ENCODE measurements at regions of chr14 and their contacts with region 1.

Region 1: DNA sequence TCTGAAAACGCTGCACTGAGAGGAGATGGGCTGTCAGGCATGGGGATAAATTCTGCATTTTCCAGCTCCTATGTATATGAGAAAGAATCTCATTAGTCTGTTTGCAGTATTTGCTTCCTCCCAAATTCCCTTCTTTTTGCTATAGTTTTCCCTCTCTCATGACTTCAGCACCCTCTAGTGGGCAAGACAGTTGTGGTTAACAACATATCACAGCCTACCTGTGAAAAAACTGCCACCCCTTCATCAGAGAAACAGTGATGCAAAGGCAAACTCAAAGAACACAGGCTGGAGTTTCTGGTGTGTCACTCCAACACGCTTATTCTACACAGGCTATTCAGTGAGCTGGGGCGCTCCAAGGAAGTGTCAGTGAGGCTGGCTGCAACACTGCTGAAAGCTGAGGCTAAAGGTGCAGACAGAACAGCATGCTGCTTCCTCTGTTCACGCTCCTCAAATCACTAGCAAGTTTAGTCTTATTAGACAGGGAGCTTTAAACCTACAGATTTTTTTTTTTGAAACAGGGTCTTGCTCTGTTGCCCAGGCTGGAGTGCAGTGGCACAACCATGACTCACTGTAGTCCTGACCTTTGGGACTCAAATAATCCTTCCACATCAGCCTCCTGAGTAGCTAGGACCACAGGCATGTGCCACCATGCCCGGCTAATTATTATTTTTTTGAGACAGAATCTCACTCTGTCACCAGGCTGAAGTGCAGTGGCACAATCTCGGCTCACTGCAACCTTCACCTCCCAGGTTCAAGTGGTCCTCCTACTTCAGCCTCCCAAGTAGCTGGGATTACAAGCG is 19.3 kb downstream of the ZC2HC1C start:
- DNase-seq: peak; percentile 35
- H3K4me3 ChIP-seq: no peak overlapping the region
- H3K27ac ChIP-seq: no peak overlapping the region
- H3K4me1 ChIP-seq: no peaks in the 10 kb centered on the region
- H3K27me3 ChIP-seq: no peaks in the 10 kb centered on the region
- CTCF ChIP-seq: peak; percentile 73 to 77 (median 74)
- EP300 ChIP-seq: no peak
- POLR2A ChIP-seq: no peak

Region 2: DNA sequence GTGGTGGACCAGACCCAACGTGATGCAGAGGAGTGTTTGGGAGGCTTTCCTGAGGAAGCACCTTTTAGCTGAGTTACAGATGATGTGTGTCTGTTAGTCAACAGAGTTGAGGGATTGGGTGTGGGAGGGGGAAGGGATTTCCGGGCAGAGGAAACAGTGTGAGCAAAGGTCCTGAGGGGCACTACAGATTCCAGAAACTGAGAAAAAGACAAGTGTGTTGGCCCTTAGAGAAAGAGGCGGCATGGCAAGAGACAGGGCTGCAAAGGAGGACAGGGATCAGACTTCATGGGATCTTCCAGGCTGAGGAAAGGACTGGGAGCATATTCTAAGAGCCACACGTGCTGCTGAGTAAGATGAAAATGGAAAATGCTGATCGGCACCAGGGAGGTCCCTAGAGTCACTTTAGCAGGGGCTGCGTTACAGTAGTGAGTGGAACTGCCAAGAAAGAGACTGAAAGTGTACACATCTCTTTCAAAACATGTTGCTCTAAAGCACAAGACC is 156.3 kb before region 1 on chr14:
- in situ Hi-C with region 1: loop called in 2 of 4 experiments (anchors 10 to 25 kb)
- intact Hi-C with region 1: no loop called
- DNase-seq: no peak
- H3K4me3 ChIP-seq: no peak overlapping the region
- H3K27ac ChIP-seq: no peak overlapping the region
- H3K4me1 ChIP-seq: peaks cover 0 to 10% (median 0%) of the 10 kb centered on the region in 4 donors
- H3K27me3 ChIP-seq: peaks cover 3% of the 10 kb centered on the region
- CTCF ChIP-seq: no peak
- EP300 ChIP-seq: no peak
- POLR2A ChIP-seq: no peak

Region 3: GRCh38 chr14:74945823-74946682 is 142.7 kb before region 1 on chr14:
- in situ Hi-C with region 1: loop called in 3 of 4 experiments (anchors 10 to 25 kb)
- intact Hi-C with region 1: loop called (anchors 5 kb)
- DNase-seq: peak; percentile 82
- H3K4me3 ChIP-seq: no peak overlapping the region
- H3K27ac ChIP-seq: peak overlapping the region in 2 of 4 donors; percentile 3 to 24
- H3K4me1 ChIP-seq: peaks cover 6 to 30% (median 22%) of the 10 kb centered on the region in 4 donors
- H3K27me3 ChIP-seq: no peaks in the 10 kb centered on the region
- CTCF ChIP-seq: peak; percentile 89 to 94 (median 91)
- EP300 ChIP-seq: no peak
- POLR2A ChIP-seq: no peak

Region 4: DNA sequence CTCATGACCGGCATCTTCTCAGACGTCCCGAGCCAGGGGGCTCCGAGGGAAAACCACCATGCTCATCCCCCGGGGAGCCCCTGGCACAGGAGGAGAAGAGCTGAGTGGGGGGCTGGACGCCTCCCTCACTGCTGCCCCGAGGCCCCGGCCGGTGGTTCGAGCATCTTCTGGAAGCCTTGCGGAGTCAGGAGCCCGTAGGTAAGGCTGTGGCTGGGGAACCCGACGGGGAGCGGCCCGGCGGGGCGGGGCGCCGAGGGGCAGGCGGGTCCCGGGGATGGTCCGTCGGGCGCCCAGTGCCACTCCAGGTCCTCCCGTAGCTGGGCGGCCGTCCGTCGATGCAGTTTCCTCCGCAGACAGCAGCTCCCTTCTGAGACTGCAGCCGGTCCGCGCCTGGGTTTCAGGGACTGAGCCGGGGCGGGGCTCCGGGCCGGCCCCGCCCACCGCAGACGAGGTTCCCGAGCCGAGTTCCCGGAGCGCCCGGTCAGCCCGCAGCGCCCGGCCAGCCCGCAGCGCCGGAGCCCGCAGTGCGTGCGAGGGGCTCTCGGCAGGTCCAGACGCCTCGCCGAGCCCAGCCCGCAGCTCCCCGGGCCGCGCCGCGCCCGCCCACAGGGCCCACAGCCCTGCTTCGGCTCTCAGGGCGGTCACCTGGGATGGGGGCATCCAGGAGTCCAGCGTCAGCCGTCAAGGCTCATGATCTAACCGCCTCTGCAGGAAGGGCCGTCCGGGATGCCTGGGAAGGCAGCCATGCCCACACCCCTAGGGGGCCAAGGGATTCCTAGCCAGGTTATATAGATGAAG is 133.3 kb before region 1 on chr14 and contains the start of gene PGF:
- in situ Hi-C with region 1: loop called in 1 of 4 experiments (anchors 10 kb)
- intact Hi-C with region 1: no loop called
- DNase-seq: peak; percentile 77
- H3K4me3 ChIP-seq: peak within 1 kb of the TSS; percentile 40 to 57 (median 44)
- H3K27ac ChIP-seq: peak within 1 kb of the TSS; percentile 25 to 44 (median 38)
- H3K4me1 ChIP-seq: peaks cover 23 to 31% (median 29%) of the 10 kb centered on the region in 4 donors
- H3K27me3 ChIP-seq: no peaks in the 10 kb centered on the region
- CTCF ChIP-seq: no peak
- EP300 ChIP-seq: no peak
- POLR2A ChIP-seq: peak; percentile 52
- total RNA-seq, gene PGF: 9.7 to 10.5 (median 10.1) TPM in 3 of 4 donors, not detected in the other

Measured in transverse colon (tissue), 4 donors.